ENCODE measurements at regions of chr12 and their contacts with region 1.

Region 1: DNA sequence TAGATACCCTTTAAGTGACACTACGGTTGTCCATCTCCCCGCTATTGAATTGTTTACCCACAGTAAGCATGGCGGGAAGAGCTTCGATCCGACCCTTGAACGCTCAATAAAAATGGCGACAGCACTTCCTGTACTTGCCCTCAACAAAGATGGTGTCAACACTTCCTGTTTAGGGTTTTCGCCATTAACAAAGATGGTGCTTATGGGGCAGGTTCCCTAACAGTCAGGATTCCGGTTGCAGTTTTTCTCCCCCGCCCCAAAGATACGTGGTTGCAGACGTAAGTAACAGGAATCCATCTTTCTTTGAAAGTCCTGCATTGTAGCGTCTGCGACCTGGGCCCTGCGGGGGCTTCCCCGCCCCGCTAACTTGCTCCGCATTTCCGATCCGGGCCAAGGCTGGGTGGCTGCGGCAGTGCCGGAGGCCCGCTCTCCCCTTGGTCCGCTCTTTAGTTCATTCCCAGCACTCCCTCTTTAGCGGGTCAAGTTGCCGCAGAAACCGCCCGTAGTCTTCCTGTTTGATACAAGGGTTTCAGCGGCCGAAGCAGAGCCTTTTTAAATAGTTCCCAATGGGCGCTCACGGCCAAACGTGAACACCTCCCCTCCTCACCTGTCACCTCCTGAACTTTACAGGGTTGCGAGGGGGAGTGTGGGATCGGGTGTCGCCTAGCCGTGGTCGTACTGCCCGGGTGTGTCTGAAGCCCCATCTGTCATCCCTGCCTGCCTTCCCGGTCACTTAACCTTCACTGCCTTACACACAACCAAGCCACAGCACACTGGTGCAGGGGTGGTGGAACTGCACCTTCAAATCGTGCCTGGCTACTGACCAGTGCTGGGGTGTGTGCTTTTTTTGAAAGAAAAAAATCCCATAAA is at the start of gene CRADD:
- DNase-seq: peak; percentile 93 to 97 (median 96)
- H3K4me3 ChIP-seq: peak within 1 kb of the TSS; percentile 71 to 73
- H3K4me3 Mint-ChIP-seq: peak within 1 kb of the TSS; percentile 97 to 99 (median 98)
- H3K27ac ChIP-seq: peak within 1 kb of the TSS; percentile 99
- H3K27ac Mint-ChIP-seq: peak within 1 kb of the TSS; percentile 99 to 100 (median 100)
- H3K4me1 ChIP-seq: peaks cover 19% of the 10 kb centered on the region
- H3K4me1 Mint-ChIP-seq: peaks cover 20 to 37% (median 28%) of the 10 kb centered on the region in 4 donors
- H3K27me3 ChIP-seq: no peaks in the 10 kb centered on the region
- H3K27me3 Mint-ChIP-seq: peaks cover 11 to 12% of the 10 kb centered on the region in 2 donors
- total RNA-seq, gene CRADD: 15.7 to 16.0 TPM

Region 2: GRCh38 chr12:93317227-93317626 is 360.2 kb before region 1 on chr12:
- CTCF ChIA-PET with region 1: no interaction called
- POLR2A ChIA-PET with region 1: no interaction called
- intact Hi-C with region 1: no loop called
- DNase-seq: no peak
- H3K4me3 ChIP-seq: no peak overlapping the region
- H3K4me3 Mint-ChIP-seq: no peak overlapping the region
- H3K27ac ChIP-seq: no peak overlapping the region
- H3K27ac Mint-ChIP-seq: peak overlapping the region in 1 of 7 donors; percentile 19
- H3K4me1 ChIP-seq: no peaks in the 10 kb centered on the region
- H3K4me1 Mint-ChIP-seq: peaks cover 0 to 4% (median 2%) of the 10 kb centered on the region in 4 donors
- H3K27me3 ChIP-seq: no peaks in the 10 kb centered on the region
- H3K27me3 Mint-ChIP-seq: no peaks in the 10 kb centered on the region

Region 3: DNA sequence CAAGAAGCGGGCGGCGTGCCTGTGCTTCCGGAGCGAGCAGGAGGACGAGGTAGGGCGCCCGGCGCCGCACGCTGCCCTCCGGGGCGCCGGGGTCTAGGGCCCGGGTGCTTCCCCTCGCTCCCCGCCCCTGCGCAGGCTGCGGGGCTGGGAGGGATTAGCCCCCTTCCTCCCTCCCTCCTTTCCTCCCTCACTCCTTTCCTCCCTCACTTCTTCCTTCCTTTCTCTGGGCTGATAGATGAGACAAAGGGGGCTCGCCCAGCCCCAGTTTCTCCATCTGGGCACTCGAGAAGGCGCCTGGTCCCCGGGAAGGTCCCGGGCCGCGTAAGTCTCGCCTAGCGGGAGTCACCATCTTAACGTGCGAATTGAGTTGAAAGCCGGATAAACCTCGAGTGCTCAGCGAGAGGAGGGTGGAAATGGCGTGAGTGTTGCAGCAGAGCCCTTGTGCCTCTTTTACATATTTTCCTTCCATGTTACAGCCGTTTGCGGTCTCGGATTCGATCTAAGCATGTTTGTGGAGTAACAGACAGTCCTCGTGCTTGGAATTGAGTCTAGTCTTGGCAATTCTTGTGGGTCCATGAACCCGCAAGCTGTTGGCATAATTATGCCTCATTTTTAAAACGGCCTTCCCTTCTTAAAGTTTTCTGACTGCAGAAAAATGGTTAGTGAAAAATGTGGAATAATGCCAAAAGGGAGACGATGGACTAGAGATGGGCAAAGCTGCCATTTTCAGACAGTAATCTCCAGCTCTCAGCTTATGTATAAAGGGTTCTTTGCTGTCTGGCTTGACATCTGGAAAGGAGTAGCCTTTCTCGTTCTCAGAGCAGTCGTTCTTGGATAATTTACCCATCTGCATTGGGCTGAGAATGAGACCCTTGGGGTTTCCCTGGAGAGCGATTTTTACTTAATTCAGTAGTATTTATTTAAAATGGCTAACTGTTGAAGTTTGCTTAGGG is 298.8 kb before region 1 on chr12:
- CTCF ChIA-PET with region 1: no interaction called
- POLR2A ChIA-PET with region 1: no interaction called
- intact Hi-C with region 1: loop called (anchors 1 kb)
- DNase-seq: peak; percentile 63 to 73 (median 69)
- H3K4me3 ChIP-seq: peak overlapping the region; percentile 71 to 88
- H3K4me3 Mint-ChIP-seq: peak overlapping the region; percentile 98 to 100 (median 99)
- H3K27ac ChIP-seq: peak overlapping the region; percentile 84
- H3K27ac Mint-ChIP-seq: peak overlapping the region; percentile 96 to 100 (median 99)
- H3K4me1 ChIP-seq: peaks cover 43% of the 10 kb centered on the region
- H3K4me1 Mint-ChIP-seq: peaks cover 28 to 57% (median 43%) of the 10 kb centered on the region in 4 donors
- H3K27me3 ChIP-seq: no peaks in the 10 kb centered on the region
- H3K27me3 Mint-ChIP-seq: no peaks in the 10 kb centered on the region

Region 4: DNA sequence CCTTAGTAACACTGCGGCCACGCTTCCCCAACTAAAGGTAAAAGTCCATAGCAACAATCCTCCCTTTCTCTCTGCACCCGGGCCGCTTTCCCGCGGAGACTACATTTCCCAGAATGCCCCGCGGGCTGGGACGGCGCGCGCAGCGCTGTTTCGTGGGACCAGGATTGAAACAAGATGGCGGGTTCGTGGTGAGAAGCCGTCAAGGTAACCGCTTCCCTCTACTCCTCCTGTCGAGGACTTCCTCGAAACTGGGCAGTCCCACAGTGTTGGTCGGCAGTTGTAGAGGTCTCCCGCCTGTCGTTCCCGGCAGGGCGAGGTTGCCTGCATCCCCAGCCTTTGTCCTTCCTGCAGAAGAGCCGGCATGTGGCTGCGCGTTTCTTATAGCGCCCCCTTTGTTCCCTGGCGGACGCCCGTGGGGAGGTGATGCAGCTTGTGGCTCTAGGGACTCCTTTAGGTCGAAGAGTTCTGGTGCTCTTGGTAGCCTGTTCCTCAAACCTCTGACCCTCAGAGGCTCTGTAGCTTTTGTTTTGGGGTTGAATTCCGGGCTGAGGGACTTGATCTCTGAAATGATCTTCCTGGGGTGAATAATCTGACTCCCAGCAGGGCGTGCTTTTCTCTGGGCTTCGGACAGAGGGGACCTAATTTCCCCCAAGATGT is 210.0 kb before region 1 on chr12 and contains the start of gene MRPL42:
- CTCF ChIA-PET with region 1: no interaction called
- POLR2A ChIA-PET with region 1: interaction called, 7 read pairs
- intact Hi-C with region 1: loop called (anchors 1 kb)
- DNase-seq: peak; percentile 91 to 96 (median 92)
- H3K4me3 ChIP-seq: peak within 1 kb of the TSS; percentile 72 to 81
- H3K4me3 Mint-ChIP-seq: peak within 1 kb of the TSS; percentile 88 to 95 (median 92)
- H3K27ac ChIP-seq: peak within 1 kb of the TSS; percentile 82
- H3K27ac Mint-ChIP-seq: peak within 1 kb of the TSS; percentile 92 to 99 (median 96)
- H3K4me1 ChIP-seq: peaks cover 28% of the 10 kb centered on the region
- H3K4me1 Mint-ChIP-seq: peaks cover 24 to 38% (median 32%) of the 10 kb centered on the region in 4 donors
- H3K27me3 ChIP-seq: no peaks in the 10 kb centered on the region
- H3K27me3 Mint-ChIP-seq: no peaks in the 10 kb centered on the region
- total RNA-seq, gene MRPL42: 40.1 to 43.2 TPM

Region 5: DNA sequence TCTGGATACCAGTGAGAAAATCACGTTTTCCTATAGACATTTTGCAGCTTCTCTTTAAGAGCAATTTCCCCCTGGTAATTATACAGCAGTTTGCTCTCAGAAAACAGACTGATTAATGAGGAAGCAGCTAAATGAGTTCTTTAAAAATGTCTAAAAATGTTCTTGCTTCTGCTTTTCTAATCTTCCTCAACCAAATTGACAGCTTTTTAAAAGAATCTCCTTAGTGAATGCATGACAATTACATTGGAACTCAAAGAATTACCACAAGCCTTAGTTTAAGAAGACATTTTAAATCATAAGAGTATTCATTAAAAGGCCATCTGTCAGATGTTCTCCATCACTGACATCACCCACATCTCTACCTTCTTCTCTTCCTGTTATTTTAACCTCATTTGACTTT is 335.2 kb after region 1 on chr12:
- CTCF ChIA-PET with region 1: interaction called, 3 read pairs
- POLR2A ChIA-PET with region 1: interaction called, 3 read pairs
- intact Hi-C with region 1: loop called (anchors 5 kb)
- DNase-seq: no peak
- H3K4me3 ChIP-seq: no peak overlapping the region
- H3K4me3 Mint-ChIP-seq: no peak overlapping the region
- H3K27ac ChIP-seq: no peak overlapping the region
- H3K27ac Mint-ChIP-seq: no peak overlapping the region
- H3K4me1 ChIP-seq: peaks cover 8% of the 10 kb centered on the region
- H3K4me1 Mint-ChIP-seq: peaks cover 2 to 13% (median 10%) of the 10 kb centered on the region in 4 donors
- H3K27me3 ChIP-seq: no peaks in the 10 kb centered on the region
- H3K27me3 Mint-ChIP-seq: peaks cover 0 to 2% of the 10 kb centered on the region in 2 donors

Region 6: DNA sequence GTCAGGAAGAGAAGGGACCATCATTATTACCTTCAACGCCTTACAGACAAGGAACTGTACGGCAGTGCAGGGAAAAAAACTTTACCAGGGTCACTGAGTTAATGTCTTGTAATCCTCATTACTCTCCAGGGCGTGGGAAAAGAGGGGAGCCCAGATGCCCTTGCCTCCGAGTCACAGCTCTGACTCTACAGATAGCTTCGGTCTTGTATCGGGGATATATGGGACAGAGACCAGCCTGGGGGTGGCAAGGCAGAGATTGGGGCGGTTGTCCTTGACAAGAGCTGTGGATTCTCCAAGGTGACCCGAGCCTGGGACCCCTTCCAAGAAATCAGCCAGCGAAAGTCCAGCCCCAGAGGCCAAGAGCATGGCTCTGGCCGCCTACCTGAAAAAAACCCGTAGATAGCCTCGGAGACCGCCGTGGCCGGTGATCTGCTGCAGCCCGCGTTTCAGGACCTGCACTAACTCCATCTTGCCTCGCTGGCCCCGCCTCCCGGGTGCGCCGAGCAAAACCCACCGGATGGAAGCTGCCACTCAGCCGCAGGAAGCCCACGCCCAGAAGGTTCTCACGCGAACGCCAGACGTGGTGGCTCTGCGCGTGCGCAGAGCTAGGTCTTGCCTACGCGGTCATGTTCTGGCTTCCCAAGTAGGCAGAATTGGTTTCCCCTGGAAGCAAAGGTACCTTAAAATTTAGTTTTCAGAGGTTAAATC is 1325.9 kb after region 1 on chr12 and contains the start of gene NDUFA12:
- CTCF ChIA-PET with region 1: no interaction called
- POLR2A ChIA-PET with region 1: no interaction called
- intact Hi-C with region 1: loop called (anchors 2 kb)
- DNase-seq: peak; percentile 92 to 94 (median 93)
- H3K4me3 ChIP-seq: peak within 1 kb of the TSS; percentile 83 to 96
- H3K4me3 Mint-ChIP-seq: peak within 1 kb of the TSS; percentile 93 to 99 (median 95)
- H3K27ac ChIP-seq: peak within 1 kb of the TSS; percentile 80
- H3K27ac Mint-ChIP-seq: peak within 1 kb of the TSS; percentile 92 to 97 (median 96)
- H3K4me1 ChIP-seq: peaks cover 61% of the 10 kb centered on the region
- H3K4me1 Mint-ChIP-seq: peaks cover 32 to 55% (median 42%) of the 10 kb centered on the region in 4 donors
- H3K27me3 ChIP-seq: no peaks in the 10 kb centered on the region
- H3K27me3 Mint-ChIP-seq: no peaks in the 10 kb centered on the region
- total RNA-seq, gene NDUFA12: 55.5 to 61.5 TPM

Measured in CD4-positive, alpha-beta memory T cell (primary cell).